Posterior cingulate gyrus (tissue), 11 donors: ENCODE measurements at regions of chr3 and their contacts with region 1.

Region 1: DNA sequence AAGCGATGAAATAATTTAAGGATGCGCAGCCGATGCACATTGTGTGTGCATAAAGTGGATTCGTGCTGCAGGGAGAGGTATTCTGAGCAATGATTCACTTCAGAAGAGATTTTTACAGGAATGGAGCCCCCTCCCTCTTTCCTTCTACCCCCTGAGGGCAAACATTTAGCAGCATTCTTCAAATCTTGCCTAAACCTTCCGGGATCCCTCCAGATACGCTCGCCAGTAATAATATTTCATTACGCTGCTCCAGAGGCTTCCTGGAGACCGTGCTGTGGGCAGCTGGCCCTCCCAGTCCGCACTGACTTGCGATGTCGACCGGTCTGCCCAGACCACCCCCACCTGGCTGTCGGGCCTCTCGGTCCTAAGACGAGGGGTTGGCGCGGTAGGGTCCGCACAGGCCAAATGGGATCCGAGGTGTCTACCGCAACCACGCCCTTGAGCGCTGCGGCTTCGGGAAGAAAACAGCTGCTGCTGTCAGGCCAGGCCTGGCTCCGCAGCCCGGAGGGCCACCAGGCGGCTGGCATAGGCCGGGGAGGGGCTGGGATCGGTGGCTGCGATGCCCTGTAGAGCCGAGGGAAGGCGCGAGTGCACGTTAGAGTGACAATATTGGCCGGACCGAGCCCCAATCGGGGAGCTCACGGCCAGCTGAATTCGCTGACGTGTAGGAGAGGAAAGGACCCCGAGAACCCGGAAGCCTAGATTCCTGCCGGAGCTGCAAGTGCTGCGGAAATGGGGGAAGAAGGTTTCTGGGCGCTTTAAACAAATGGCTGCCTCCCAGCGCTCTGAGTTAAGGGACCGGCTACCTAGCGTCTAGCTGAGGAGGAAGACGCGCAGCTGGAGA is 14.3 kb downstream of the ZIC4 start:
- DNase-seq: peak; percentile 65 to 97 (median 80)

Region 2: DNA sequence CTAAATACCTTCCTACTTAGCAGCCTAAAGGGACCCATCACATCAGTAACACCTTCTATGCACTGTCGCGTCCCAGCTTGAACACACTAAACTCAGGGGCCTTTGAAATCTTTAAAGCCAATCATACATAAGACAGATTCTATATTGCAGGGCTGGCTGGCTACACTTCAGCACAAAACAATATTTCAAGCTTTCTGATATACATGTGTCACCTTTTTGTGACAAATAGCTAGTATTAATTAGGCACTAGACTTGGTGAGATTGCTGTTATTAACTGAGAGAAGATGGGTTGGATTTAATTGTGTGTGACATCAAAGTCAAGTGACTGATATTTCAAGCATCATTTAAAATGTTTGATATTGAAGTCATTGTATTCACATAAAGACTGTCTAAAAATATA is 134.1 kb before region 1 on chr3:
- intact Hi-C with region 1: no loop called
- DNase-seq: no peak

Region 3: GRCh38 chr3:147409143-147410115 is 17.4 kb after region 1 on chr3 and contains the start of gene ZIC1:
- intact Hi-C with region 1: loop called (anchors 2 kb)
- DNase-seq: peak in 9 of 10 donors; percentile 50 to 96 (median 60)

Region 4: GRCh38 chr3:147616998-147617619 is 225.1 kb after region 1 on chr3:
- intact Hi-C with region 1: loop called (anchors 10 kb)
- DNase-seq: no peak

Region 5: DNA sequence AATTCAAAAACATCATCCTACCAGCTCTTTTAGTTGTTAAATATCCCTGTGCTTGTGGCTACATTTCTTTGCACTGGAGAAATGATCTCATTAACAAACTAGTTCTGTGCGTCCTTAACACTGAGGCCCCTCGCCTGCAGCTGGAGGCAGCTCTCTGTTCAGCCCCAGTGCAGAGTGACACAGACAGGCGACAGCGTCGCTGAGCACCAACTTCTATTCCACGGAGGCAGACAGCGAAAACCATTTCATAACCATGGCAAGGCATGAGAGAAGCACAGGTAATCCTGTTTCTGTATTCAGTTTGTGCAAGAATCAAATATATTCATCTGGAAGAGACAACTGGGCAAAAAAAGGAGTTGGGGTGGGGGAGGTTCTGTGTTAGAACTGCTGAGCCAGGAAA is 547.8 kb after region 1 on chr3:
- intact Hi-C with region 1: loop called (anchors 5 kb)
- DNase-seq: peak in 7 of 10 donors; percentile 35 to 93 (median 48)

Region 6: DNA sequence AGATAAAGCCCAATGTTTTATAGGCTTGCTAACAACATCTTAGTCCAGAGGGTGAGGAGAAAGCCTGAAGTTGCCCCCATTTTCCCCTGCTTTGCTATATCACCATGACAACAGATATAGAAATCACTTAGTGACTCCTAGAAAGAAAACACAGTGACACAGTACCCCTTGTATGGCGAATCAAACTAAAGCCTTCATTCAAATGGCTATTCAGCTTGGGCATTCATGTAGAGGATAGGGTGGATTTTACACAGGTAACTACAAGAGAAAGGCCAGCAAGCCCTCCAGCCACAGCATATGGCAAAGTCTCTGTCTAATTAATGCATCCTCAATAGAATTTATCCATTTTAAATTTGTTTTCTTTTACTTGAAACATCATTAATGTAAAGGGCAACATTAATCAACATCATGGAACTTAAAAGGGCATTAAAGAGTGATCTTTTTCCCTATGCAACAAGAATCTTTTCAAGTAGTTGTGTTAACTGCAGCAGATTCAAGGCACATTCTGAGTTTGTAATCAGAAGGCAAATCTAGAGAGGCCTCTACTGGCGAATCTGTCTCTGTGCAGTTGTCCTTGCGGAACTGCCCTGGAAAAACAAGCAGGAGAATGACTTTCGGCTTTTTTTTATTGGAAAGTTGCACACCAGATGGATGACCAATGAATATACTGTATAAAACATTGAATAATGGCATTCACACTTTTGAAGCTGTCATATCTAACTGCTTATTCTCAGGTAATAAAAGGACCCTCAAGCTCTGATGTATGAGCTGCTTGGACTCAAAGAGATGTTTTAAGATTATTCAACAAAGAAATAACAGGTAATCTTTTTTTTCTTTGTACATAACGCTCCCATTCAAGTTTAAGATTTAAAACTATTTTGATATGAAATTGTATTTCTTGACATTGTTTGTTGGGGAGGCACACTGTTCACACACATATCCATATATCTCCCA is 684.0 kb after region 1 on chr3:
- intact Hi-C with region 1: loop called (anchors 10 kb)
- DNase-seq: peak in 4 of 10 donors; percentile 27 to 74 (median 30)